Upper lobe of right lung (tissue), 1 donor: ENCODE measurements at regions of chr1 and their contacts with region 1.

Region 1: GRCh38 chr1:163174524-163175437 is 27.9 kb downstream of the RGS5 start:
- DNase-seq: peak; percentile 72
- ATAC-seq: peak; percentile 65
- H3K4me3 ChIP-seq: no peak overlapping the region
- H3K27ac ChIP-seq: no peak overlapping the region
- H3K4me1 ChIP-seq: no peaks in the 10 kb centered on the region
- H3K27me3 ChIP-seq: no peaks in the 10 kb centered on the region
- CTCF ChIP-seq: peak; percentile 90

Region 2: DNA sequence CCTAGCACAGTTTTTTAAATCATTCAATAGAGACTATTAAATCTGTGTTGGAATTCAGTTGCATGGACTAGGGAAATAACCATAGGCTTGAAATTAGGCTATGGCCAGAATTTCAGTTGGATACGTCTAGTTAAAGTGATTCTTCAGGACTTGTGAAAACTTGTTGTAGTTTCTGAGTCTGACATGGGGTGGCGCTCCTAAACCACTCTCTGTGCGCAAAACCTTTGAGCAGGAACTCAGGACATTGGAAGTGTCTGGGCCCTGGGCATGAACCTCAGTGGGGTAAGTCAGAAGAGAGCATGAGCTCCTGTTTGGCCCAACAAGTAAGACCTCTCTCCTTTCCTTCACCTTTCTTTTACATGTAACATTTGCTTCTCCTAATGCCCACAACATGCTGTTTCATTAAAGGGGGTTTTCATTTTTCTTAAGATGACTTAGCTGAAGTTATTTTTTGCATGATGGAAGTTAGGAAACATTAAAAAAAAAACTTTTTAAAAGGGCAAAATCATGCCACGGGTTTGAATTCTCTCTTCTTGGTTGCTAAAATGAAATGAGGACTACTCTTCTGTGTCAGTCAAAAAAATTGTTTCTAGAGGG is 296.7 kb before region 1 on chr1:
- intact Hi-C with region 1: loop called (anchors 10 kb)
- DNase-seq: no peak
- ATAC-seq: peak; percentile 85
- H3K4me3 ChIP-seq: no peak overlapping the region
- H3K27ac ChIP-seq: no peak overlapping the region
- H3K4me1 ChIP-seq: no peaks in the 10 kb centered on the region
- H3K27me3 ChIP-seq: no peaks in the 10 kb centered on the region
- CTCF ChIP-seq: peak; percentile 66

Region 3: GRCh38 chr1:163035446-163036249 is 139.1 kb before region 1 on chr1:
- intact Hi-C with region 1: no loop called
- DNase-seq: no peak
- ATAC-seq: no peak
- H3K4me3 ChIP-seq: no peak overlapping the region
- H3K27ac ChIP-seq: no peak overlapping the region
- H3K4me1 ChIP-seq: no peaks in the 10 kb centered on the region
- H3K27me3 ChIP-seq: no peaks in the 10 kb centered on the region
- CTCF ChIP-seq: no peak

Region 4: DNA sequence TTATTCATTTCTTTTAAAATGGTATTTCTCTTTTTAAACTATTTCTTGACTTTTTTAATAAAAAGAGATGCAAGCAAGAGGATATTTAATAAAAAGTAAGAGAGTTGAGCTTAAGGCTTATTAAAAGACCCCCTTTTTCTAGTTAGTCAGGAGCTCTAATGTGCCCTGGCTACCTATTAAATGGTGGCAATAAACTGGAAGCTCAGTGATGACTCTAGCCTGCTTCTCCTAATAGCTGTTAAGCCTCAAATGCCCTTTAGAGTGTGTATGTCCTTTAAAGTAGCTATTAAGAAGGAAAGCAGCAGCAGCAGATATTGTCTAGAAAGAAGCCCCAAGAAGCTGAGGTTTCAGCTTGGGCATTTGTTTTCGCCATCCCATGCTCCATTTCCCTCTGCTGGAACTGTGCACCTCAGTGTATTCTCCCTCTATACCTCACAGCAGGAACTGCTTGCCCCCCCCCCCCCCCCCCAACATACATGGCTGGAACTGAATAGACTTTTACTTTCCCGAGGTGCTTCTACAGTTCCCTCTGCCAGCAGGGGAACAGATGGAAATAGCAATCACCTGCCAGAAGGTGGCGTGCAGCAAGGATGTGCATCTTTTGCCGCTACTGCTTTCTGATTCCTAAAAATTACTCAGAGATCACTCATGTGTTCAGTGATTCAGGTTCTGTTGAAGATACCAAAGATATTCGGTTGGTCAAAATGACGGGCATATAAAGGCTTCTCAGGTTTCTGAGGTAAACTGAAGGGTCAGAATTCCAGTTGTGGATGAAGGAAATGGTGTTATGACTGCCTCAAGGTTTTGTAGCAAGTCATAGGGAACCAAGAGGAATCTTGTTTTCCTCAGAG is 103.2 kb before region 1 on chr1:
- intact Hi-C with region 1: loop called (anchors 10 kb)
- DNase-seq: peak; percentile 61
- ATAC-seq: peak; percentile 76
- H3K4me3 ChIP-seq: no peak overlapping the region
- H3K27ac ChIP-seq: no peak overlapping the region
- H3K4me1 ChIP-seq: no peaks in the 10 kb centered on the region
- H3K27me3 ChIP-seq: peaks cover 4% of the 10 kb centered on the region
- CTCF ChIP-seq: peak; percentile 62